ENCODE measurements at regions of chr19 and their contacts with region 1.

Region 1: DNA sequence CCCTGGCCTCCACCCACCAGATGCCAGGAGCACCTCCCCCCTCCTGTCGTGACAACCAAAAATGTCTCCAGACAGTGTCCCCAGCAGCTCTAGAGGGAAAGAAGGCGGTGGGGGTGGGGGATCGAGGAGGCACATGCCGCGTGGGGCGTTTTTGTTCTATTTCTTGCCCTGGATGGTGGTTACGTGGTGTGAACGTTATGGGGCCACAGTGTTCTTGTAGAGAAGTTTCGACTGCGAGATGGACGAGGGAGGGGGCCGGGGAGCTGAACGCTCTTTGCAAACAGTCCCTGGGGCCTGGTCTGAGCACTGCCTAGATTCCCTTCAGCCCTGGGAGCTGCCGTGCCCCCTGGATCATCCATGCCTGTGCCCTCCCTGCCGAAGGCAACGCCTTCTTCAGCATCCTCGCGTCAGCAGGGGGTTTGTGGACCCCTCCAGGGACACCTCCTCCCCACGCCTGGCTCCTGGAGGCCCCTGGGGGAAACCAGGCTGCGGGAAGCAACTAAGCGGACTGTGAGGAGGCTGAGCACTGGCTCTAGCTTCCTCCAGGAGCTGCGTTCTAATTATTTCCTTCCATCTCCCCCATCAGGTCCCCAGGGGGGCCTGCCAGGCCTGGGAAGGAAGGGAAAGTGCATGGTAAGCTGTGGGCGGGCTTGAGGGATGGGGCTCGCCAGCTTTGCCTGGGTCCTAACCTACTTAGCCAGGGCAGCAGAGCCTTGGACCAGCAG is 131.5 kb downstream of the IER2 start:
- DNase-seq: no peak
- ATAC-seq: no peak
- H3K4me3 ChIP-seq: no peak overlapping the region
- H3K4me3 Mint-ChIP-seq: no peak overlapping the region
- H3K27ac ChIP-seq: no peak overlapping the region
- H3K27ac Mint-ChIP-seq: no peak overlapping the region
- H3K4me1 ChIP-seq: peaks cover 0 to 9% of the 10 kb centered on the region in 2 experiments
- H3K4me1 Mint-ChIP-seq: peaks cover 15 to 22% (median 20%) of the 10 kb centered on the region in 3 donors
- H3K27me3 ChIP-seq: peaks cover 0 to 39% of the 10 kb centered on the region in 2 experiments
- H3K27me3 Mint-ChIP-seq: peaks cover 2 to 9% of the 10 kb centered on the region in 2 donors

Region 2: GRCh38 chr19:12956446-12957388 is 325.0 kb before region 1 on chr19 and contains the start of gene GADD45GIP1:
- CTCF ChIA-PET with region 1: no interaction called
- POLR2A ChIA-PET with region 1: no interaction called
- DNase-seq: peak; percentile 60 to 85 (median 74)
- ATAC-seq: peak; percentile 95 to 98 (median 98)
- H3K4me3 ChIP-seq: peak within 1 kb of the TSS; percentile 67 to 78
- H3K4me3 Mint-ChIP-seq: peak within 1 kb of the TSS; percentile 82 to 90 (median 86)
- H3K27ac ChIP-seq: peak within 1 kb of the TSS; percentile 75
- H3K27ac Mint-ChIP-seq: peak within 1 kb of the TSS; percentile 93 to 96
- H3K4me1 ChIP-seq: peaks cover 6 to 25% of the 10 kb centered on the region in 2 experiments
- H3K4me1 Mint-ChIP-seq: peaks cover 18 to 30% (median 27%) of the 10 kb centered on the region in 3 donors
- H3K27me3 ChIP-seq: no peaks in the 10 kb centered on the region
- H3K27me3 Mint-ChIP-seq: no peaks in the 10 kb centered on the region
- total RNA-seq, gene GADD45GIP1: 6.2 to 22.6 (median 20.1) TPM

Region 3: DNA sequence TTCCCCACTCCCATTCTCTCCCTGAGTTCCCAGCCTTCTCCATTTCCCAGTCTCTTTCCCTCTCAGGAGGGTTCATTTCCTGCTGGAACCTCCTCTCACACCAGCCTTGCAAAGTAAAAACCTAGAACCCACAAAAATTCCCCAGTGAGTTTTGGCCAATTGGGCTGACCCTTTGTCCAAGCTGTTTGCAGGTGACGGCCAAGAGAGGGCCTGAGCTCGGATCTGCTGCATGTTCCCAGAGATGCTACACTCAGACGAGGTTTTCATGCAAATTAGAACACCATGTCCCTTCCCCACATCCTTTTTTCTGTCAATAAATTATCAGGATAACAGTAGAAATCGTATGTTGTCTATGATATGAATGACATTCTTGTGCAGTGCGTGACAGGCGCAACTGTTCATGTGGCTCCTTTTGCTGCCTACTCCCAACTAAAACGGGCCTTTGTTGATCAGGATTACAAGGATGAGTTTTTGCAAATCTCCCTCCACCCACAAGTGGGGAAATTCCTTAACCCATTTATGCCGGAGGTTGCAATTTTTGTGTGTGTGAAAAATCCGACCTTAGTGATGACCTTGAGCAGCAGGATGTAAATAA is 75.1 kb after region 1 on chr19:
- CTCF ChIA-PET with region 1: no interaction called
- POLR2A ChIA-PET with region 1: no interaction called
- DNase-seq: no peak
- ATAC-seq: no peak
- H3K4me3 ChIP-seq: no peak overlapping the region
- H3K4me3 Mint-ChIP-seq: no peak overlapping the region
- H3K27ac ChIP-seq: no peak overlapping the region
- H3K27ac Mint-ChIP-seq: no peak overlapping the region
- H3K4me1 ChIP-seq: no peaks in the 10 kb centered on the region
- H3K4me1 Mint-ChIP-seq: no peaks in the 10 kb centered on the region
- H3K27me3 ChIP-seq: peaks cover 0 to 34% of the 10 kb centered on the region in 2 experiments
- H3K27me3 Mint-ChIP-seq: peaks cover 33 to 50% of the 10 kb centered on the region in 2 donors

Region 4: DNA sequence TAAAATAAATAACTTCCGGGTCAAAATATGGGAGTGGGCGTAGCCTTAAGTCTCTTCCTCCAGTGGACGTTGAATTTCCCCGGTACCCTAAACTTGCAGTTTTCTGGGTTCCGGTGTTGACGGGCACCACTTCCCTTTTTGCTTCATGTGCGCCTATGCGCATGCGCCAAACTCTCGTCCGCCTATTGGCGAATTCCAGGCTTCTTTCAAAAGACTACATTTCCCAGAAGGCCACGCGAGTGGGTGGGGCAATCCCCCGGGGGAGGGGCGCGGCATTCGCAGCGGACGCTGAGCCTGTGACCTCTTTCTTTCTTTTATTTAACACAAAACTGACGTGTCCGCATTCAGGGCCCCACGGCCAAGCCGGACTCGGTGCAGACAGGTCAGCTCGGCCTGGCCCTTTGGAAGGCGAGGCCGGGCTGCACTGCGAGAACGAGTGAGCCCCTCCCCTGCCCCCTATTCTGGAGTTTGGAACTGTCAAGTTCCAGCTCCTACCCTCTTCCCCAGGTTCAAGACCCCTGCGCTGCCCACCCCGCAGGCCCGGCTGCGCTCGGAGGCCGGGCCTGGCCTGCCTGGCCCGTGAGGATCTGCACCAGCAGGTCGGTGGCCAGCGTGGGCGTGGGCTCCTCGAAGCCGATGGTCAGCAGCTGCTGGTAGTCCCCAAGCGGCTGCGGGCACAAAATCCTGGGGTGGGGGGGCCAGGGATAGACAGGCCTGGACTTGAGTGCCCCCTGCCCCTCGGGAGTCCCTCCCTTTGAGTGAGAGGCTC is 799.8 kb after region 1 on chr19:
- CTCF ChIA-PET with region 1: interaction called in 1 of 2 experiments, 12 read pairs
- POLR2A ChIA-PET with region 1: no interaction called
- DNase-seq: peak; percentile 96 to 100 (median 99)
- ATAC-seq: peak; percentile 94 to 96 (median 95)
- H3K4me3 ChIP-seq: peak overlapping the region; percentile 66 to 75
- H3K4me3 Mint-ChIP-seq: peak overlapping the region; percentile 85 to 93 (median 90)
- H3K27ac ChIP-seq: peak overlapping the region; percentile 86
- H3K27ac Mint-ChIP-seq: peak overlapping the region; percentile 91 to 93
- H3K4me1 ChIP-seq: peaks cover 9 to 21% of the 10 kb centered on the region in 2 experiments
- H3K4me1 Mint-ChIP-seq: peaks cover 20 to 24% (median 21%) of the 10 kb centered on the region in 3 donors
- H3K27me3 ChIP-seq: no peaks in the 10 kb centered on the region
- H3K27me3 Mint-ChIP-seq: no peaks in the 10 kb centered on the region

Measured in T-cell (primary cell).